Ascending aorta (tissue), 2 donors: ENCODE measurements at regions of chr19 and their contacts with region 1.

Region 1: GRCh38 chr19:33778089-33778791 is 18.4 kb upstream of the KCTD15 start:
- DNase-seq: peak in 1 of 2 donors; percentile 84
- H3K4me3 ChIP-seq: peak overlapping the region; percentile 17 to 38
- H3K27ac ChIP-seq: no peak overlapping the region
- H3K4me1 ChIP-seq: peaks cover 10% of the 10 kb centered on the region in 2 donors
- H3K27me3 ChIP-seq: no peaks in the 10 kb centered on the region
- CTCF ChIP-seq: peak; percentile 100

Region 2: DNA sequence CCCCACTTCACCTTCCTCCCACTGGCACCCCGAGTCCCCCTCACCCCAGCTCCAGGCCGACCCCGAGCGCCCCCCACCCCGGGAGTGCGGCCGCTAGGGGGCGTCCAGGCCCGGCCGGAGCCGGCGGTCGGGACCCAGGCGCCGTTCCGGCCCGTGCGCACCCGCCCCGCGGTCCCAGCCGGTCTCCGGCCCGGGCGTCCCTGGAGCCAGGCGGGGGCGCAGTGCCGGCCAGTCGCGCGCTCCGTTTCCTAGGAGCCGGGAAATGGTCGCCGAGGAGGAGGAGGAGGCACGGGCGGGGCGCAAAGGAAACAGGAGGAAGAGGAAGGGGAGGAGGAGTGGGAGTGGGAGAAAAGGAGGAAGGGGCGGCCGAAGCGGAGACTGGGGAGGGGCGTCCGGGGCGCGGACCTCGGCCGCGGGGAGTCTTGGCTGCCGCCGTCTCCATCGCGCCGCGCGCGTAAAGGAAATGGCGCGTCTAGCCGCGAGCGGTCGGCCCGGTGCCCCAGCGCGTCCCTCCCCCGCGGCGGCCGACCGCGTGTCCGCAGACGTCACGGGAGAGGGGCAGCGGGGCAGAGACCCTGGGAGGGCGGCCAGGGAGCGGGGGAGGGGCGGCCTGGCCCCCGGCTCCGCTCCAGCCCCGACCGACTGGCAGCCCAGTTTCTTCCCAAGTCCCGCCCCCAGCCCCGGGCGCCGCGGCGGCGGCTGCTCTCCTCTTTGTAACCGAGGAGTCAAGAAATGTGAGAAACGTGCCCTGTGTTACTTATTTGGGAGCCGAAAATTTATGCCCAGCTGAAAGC is 17.3 kb after region 1 on chr19:
- intact Hi-C with region 1: loop called (anchors 1 kb)
- DNase-seq: peak in 1 of 2 donors; percentile 88
- H3K4me3 ChIP-seq: peak overlapping the region; percentile 77 to 93
- H3K27ac ChIP-seq: peak overlapping the region; percentile 93 to 96
- H3K4me1 ChIP-seq: peaks cover 4 to 6% of the 10 kb centered on the region in 2 donors
- H3K27me3 ChIP-seq: no peaks in the 10 kb centered on the region
- CTCF ChIP-seq: peak; percentile 69 to 83 (median 77)

Region 3: DNA sequence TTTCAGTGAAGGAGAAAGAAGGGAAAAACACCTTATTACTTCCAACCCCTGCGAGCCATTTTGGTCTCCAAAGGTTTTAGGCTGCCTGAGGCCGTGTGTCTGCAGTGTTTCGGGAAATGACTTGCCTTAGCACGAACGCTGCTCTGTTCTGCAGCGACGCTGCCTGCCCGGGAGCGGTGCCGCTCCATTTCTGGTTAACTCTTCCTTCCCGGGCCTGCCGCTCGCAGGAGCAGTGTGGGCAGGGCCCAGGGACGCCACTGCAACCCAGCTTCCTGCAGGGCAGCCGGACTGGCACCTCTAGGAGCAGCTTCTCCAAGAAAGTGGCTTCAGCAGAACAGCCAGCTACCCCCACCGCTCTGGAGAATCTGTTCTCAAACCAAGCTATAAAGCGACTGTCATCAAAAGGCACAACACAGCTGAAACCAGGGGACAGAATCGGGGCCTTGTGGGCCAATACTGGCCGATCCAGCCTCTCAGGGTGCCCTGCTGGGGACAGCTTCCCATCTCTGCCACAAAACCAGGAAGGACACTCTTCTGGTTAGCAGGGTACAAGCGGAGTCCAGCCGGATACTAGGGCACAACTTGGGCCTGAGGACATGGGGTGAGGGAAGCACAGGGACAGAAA is 90.7 kb after region 1 on chr19:
- intact Hi-C with region 1: loop called (anchors 2 kb)
- DNase-seq: peak in 1 of 2 donors; percentile 66
- H3K4me3 ChIP-seq: peak overlapping the region in 1 of 2 donors; percentile 58
- H3K27ac ChIP-seq: peak overlapping the region in 1 of 2 donors; percentile 44
- H3K4me1 ChIP-seq: peaks cover 0 to 7% of the 10 kb centered on the region in 2 donors
- H3K27me3 ChIP-seq: no peaks in the 10 kb centered on the region
- CTCF ChIP-seq: peak in 1 of 3 experiments; percentile 18

Region 4: DNA sequence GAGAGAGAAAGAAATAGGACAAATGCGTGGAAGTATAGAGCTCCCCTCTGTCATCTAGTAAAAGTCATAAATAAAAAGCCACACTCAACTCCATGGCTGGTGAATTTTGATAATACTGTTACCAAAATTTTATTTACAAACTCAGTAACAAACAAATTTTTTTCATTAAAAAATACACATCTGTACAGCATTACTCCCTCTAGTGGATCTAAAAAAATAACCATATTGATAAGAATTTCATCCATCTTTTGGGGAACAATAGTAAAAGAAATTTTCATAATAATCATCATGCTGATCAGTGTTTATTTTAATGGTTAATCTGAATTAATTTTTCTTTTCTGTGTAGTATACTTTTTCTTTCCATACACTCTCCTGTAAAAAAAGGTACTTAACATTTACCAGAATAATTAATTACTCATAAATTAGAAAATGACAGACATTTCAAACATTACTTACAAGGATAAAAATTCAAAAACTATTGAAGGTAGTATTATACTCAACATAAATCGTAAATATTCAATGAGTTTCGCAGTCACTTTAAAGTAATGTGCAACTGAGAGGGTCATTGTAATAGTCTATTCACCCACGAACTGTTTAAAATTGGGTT is 220.6 kb after region 1 on chr19:
- intact Hi-C with region 1: loop called (anchors 1 kb)
- DNase-seq: no peak
- H3K4me3 ChIP-seq: no peak overlapping the region
- H3K27ac ChIP-seq: no peak overlapping the region
- H3K4me1 ChIP-seq: no peaks in the 10 kb centered on the region
- H3K27me3 ChIP-seq: no peaks in the 10 kb centered on the region
- CTCF ChIP-seq: peak in 1 of 3 experiments; percentile 29

Region 5: DNA sequence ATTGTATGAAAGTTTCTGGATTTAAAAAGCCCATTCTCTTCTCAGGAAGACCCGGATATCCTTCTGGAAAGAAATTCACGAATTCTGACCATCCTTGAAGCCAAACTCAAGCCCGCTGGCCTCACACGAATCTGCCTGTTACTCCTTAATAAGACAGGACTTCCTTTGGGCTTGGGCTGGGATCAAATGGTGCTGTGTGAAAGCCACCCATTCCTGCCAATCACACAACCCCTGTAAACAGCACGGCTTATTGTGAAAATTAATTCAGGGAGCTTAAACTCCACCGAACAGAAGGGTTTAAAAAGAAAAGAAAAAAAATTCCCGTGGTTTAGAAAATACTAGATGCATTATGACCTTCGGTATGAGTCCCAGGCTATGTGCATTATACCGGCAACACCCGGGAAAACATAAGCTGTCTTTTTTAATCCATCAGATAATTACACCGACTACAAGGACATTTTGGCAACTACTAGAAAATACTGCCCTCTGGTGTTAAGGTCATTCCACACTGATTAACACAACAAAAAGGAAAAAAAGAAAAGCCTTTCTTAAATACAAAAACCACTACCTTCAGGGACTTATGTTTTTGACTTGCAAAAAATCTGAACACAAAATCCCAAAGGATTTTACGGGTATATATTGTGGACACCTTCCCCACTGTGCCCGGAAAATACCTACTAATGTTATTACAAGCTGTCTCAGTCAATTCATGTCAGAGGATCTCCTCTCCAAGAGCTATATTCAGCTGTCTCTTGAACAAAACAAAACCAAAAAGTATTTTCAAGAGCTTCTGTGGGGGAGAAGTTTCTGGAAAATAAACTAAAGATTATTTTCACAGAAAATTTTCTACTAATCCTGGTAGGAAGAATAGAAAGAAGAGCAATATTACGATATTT is 318.0 kb after region 1 on chr19:
- intact Hi-C with region 1: loop called (anchors 1 kb)
- DNase-seq: no peak
- H3K4me3 ChIP-seq: no peak overlapping the region
- H3K27ac ChIP-seq: no peak overlapping the region
- H3K4me1 ChIP-seq: no peaks in the 10 kb centered on the region
- H3K27me3 ChIP-seq: no peaks in the 10 kb centered on the region
- CTCF ChIP-seq: peak in 2 of 3 experiments; percentile 33 to 47

Region 6: GRCh38 chr19:34145741-34146202 is 367.5 kb after region 1 on chr19:
- intact Hi-C with region 1: loop called (anchors 2 kb)
- DNase-seq: no peak
- H3K4me3 ChIP-seq: no peak overlapping the region
- H3K27ac ChIP-seq: no peak overlapping the region
- H3K4me1 ChIP-seq: no peaks in the 10 kb centered on the region
- H3K27me3 ChIP-seq: no peaks in the 10 kb centered on the region
- CTCF ChIP-seq: peak; percentile 50 to 73 (median 69)